Activated CD4-positive, alpha-beta memory T cell treated with anti-CD3 and anti-CD28 coated beads, Interleukin-2, amount 10 ng/mL, durations not matched to agents 7 days and 5 days (primary cell): ENCODE measurements at regions of chr2 and their contacts with region 1.

Region 1: DNA sequence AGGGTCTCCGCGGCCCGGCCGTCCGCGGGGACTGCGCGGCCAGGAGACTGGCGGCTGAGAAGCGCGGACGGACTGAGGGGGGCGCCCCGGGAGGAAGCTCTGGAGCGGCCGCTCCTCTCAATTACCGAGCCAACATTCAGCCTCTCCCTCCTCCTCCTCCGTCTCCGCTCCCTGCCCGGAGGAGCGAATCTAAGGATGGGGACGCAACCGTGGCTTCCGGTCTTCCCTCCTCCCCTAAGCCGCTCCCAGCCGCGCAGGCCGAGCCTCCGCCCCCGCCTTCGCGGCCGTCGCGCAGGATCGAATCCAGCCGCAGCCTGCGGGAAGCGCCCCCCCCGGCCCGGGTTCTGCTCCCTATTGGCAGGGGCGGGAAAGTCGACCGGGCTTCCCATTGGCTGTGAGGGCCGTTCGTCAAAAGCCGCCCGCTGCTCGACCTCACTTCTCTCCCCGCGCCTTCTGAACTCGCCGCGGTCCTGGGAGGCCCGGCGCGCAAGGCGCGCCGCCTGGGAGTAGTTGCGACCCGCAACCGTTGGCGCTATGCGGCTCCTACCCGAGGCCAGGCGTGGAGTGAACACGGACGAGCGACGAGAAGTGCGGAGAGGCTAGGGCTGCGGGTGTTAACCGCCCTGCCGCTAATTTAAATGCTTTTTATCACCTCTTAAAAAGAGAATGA is at the start of gene HNRNPLL:
- DNase-seq: peak; percentile 97
- H3K4me3 Mint-ChIP-seq: peak within 1 kb of the TSS; percentile 89
- H3K27ac Mint-ChIP-seq: peak within 1 kb of the TSS; percentile 89
- H3K4me1 Mint-ChIP-seq: peaks cover 46% of the 10 kb centered on the region
- H3K27me3 Mint-ChIP-seq: no peaks in the 10 kb centered on the region
- total RNA-seq, gene HNRNPLL: 104 to 119 TPM

Region 2: GRCh38 chr2:38394903-38395341 is 207.9 kb before region 1 on chr2:
- CTCF ChIA-PET with region 1: no interaction called
- POLR2A ChIA-PET with region 1: no interaction called
- DNase-seq: no peak
- H3K4me3 Mint-ChIP-seq: no peak overlapping the region
- H3K27ac Mint-ChIP-seq: no peak overlapping the region
- H3K4me1 Mint-ChIP-seq: peaks cover 17% of the 10 kb centered on the region
- H3K27me3 Mint-ChIP-seq: peaks cover 22% of the 10 kb centered on the region

Region 3: DNA sequence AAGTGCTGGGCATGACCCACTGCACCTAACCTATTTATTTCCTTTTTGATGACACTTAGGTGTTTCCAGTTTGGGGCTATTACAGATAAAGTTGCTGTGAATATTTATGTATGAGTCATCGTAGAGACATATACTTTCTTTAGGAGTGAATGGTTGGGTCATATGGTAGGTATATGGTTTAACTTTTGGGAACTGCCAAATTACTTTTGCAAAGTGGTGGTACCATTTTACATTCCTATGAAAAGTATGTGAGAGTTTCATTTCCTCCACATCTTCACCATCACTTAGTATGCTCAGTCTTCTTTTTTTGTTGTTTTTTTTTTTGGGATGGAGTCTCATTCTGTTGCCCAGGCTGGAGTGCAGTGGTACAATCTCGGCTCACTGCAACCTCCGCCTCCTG is 56.3 kb before region 1 on chr2:
- CTCF ChIA-PET with region 1: no interaction called
- POLR2A ChIA-PET with region 1: no interaction called
- DNase-seq: no peak
- H3K4me3 Mint-ChIP-seq: no peak overlapping the region
- H3K27ac Mint-ChIP-seq: peak overlapping the region; percentile 41
- H3K4me1 Mint-ChIP-seq: peaks cover 22% of the 10 kb centered on the region
- H3K27me3 Mint-ChIP-seq: no peaks in the 10 kb centered on the region

Region 4: GRCh38 chr2:38590053-38590452 is 12.8 kb before region 1 on chr2:
- CTCF ChIA-PET with region 1: interaction called, 84 read pairs
- POLR2A ChIA-PET with region 1: interaction called, 84 read pairs
- DNase-seq: no peak
- H3K4me3 Mint-ChIP-seq: peak overlapping the region; percentile 36
- H3K27ac Mint-ChIP-seq: peak overlapping the region; percentile 62
- H3K4me1 Mint-ChIP-seq: peaks cover 78% of the 10 kb centered on the region
- H3K27me3 Mint-ChIP-seq: no peaks in the 10 kb centered on the region

Region 5: GRCh38 chr2:38643021-38643671 is 40.3 kb after region 1 on chr2:
- CTCF ChIA-PET with region 1: interaction called, 13 read pairs
- POLR2A ChIA-PET with region 1: interaction called, 13 read pairs
- DNase-seq: no peak
- H3K4me3 Mint-ChIP-seq: peak overlapping the region; percentile 64
- H3K27ac Mint-ChIP-seq: peak overlapping the region; percentile 100
- H3K4me1 Mint-ChIP-seq: peaks cover 59% of the 10 kb centered on the region
- H3K27me3 Mint-ChIP-seq: no peaks in the 10 kb centered on the region

Region 6: DNA sequence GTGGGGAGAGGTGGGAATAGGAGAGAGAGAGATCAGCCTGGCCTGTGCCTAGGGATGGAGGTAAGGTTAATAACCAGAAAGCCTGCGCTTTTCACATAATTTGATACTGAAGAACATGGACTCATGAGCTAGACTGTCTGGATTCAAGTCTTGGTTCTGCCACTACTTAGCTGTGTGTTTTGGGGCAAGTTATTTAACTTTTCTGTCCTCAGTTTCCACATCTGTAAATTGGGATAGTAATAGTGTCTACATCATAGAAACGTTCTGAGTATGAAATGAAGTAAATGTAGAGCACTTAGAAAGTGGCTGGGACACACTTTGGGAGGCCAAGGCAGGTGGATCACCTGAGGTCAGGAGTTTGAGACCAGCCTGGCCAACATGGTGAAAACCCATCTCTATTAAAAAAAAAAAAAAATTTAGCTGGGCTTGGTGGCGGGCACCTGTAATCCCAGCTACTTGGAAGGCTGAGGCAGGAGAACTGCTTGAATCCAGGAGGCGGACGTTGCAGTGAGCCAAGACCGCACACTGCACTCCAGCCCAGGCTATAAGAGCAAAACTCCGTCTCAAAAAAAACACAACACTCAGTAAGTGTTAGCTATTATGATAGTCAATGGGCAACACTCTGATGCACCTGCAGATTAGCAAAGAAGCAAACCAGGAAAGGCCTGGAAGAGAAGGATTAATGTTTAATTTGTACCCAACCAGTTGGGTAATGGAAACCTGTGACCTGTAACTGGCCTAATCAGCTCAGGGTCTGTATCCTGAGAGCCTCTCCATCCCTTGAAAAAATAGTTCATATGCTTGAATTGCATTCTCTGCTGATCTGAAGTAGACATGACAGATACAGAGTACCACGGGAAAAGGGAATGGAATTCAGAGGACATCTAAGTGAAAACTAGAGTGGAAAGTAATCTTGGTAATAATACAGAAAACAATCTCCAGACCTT is 69.9 kb after region 1 on chr2:
- CTCF ChIA-PET with region 1: interaction called, 117 read pairs
- POLR2A ChIA-PET with region 1: interaction called, 646 read pairs
- DNase-seq: no peak
- H3K4me3 Mint-ChIP-seq: no peak overlapping the region
- H3K27ac Mint-ChIP-seq: peak overlapping the region; percentile 9
- H3K4me1 Mint-ChIP-seq: peaks cover 79% of the 10 kb centered on the region
- H3K27me3 Mint-ChIP-seq: no peaks in the 10 kb centered on the region

Region 7: GRCh38 chr2:38697125-38697840 is 94.4 kb after region 1 on chr2:
- CTCF ChIA-PET with region 1: interaction called, 28 read pairs
- POLR2A ChIA-PET with region 1: interaction called, 19 read pairs
- DNase-seq: peak; percentile 33
- H3K4me3 Mint-ChIP-seq: peak overlapping the region; percentile 12
- H3K27ac Mint-ChIP-seq: peak overlapping the region; percentile 90
- H3K4me1 Mint-ChIP-seq: peaks cover 87% of the 10 kb centered on the region
- H3K27me3 Mint-ChIP-seq: no peaks in the 10 kb centered on the region

Region 8: GRCh38 chr2:38720613-38721241 is 117.9 kb after region 1 on chr2:
- CTCF ChIA-PET with region 1: interaction called, 86 read pairs
- POLR2A ChIA-PET with region 1: interaction called, 51 read pairs
- DNase-seq: no peak
- H3K4me3 Mint-ChIP-seq: no peak overlapping the region
- H3K27ac Mint-ChIP-seq: peak overlapping the region; percentile 70
- H3K4me1 Mint-ChIP-seq: peaks cover 65% of the 10 kb centered on the region
- H3K27me3 Mint-ChIP-seq: no peaks in the 10 kb centered on the region

Region 9: GRCh38 chr2:38830526-38831159 is 227.8 kb after region 1 on chr2:
- CTCF ChIA-PET with region 1: no interaction called
- POLR2A ChIA-PET with region 1: no interaction called
- DNase-seq: no peak
- H3K4me3 Mint-ChIP-seq: no peak overlapping the region
- H3K27ac Mint-ChIP-seq: no peak overlapping the region
- H3K4me1 Mint-ChIP-seq: peaks cover 3% of the 10 kb centered on the region
- H3K27me3 Mint-ChIP-seq: no peaks in the 10 kb centered on the region